ENCODE measurements at regions of chr17 and their contacts with region 1.

Region 1: GRCh38 chr17:80426681-80427326 is 11.8 kb downstream of the ENDOV start:
- DNase-seq: peak; percentile 46
- H3K4me3 ChIP-seq: no peak overlapping the region
- H3K27ac ChIP-seq: no peak overlapping the region
- H3K4me1 ChIP-seq: no peaks in the 10 kb centered on the region
- H3K27me3 ChIP-seq: no peaks in the 10 kb centered on the region
- CTCF ChIP-seq: peak; percentile 86 to 98

Region 2: DNA sequence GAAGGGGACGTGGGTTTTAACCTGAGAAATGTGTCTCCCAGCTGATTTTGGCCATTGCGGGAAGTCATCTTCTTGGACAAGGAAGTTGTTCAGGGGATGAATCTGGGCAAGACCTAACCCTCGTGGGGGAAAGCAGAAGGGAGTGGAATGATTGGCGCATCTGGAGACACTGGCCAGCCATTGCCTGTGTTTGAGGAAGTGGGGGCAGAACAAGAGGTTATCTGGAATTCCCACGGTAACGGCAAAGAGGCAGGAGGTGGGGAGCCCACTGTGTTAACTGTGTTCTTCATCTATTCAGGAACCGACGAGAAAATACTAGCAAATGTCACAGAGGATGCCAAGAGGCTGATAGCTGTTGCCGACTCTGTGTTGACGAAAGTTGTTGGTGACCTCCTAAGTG is 99.3 kb before region 1 on chr17:
- CTCF ChIA-PET with region 1: no interaction called
- dilution Hi-C with region 1: no loop called
- in situ Hi-C with region 1: no loop called
- intact Hi-C with region 1: no loop called
- DNase-seq: no peak
- H3K4me3 ChIP-seq: no peak overlapping the region
- H3K27ac ChIP-seq: no peak overlapping the region
- H3K4me1 ChIP-seq: no peaks in the 10 kb centered on the region
- H3K27me3 ChIP-seq: no peaks in the 10 kb centered on the region
- CTCF ChIP-seq: no peak

Region 3: GRCh38 chr17:80477647-80478478 is 51.1 kb after region 1 on chr17:
- CTCF ChIA-PET with region 1: no interaction called
- dilution Hi-C with region 1: no loop called
- in situ Hi-C with region 1: no loop called
- intact Hi-C with region 1: loop called (anchors 2 kb)
- DNase-seq: peak; percentile 35
- H3K4me3 ChIP-seq: peak overlapping the region in 2 of 3 experiments; percentile 30
- H3K27ac ChIP-seq: no peak overlapping the region
- H3K4me1 ChIP-seq: peaks cover 33% of the 10 kb centered on the region
- H3K27me3 ChIP-seq: peaks cover 57% of the 10 kb centered on the region
- CTCF ChIP-seq: peak; percentile 18 to 61

Region 4: DNA sequence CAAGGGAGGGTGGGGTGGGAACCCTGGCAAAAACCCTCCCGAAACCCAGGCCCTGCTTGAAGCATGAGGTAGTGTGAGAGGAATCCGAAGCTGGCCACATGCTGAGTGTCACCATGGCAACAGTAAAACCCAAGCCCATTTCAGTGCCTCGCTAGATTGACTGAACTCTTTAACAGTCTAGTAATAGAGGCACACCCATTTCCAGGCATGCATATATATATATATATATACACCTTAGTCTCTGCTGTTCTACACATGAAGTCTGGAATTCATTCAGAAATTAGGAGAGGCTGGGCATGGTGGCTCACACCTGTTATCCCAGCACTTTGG is 505.1 kb after region 1 on chr17:
- CTCF ChIA-PET with region 1: interaction called, 11 read pairs
- dilution Hi-C with region 1: no loop called
- in situ Hi-C with region 1: no loop called
- intact Hi-C with region 1: no loop called
- DNase-seq: peak; percentile 25
- H3K4me3 ChIP-seq: no peak overlapping the region
- H3K27ac ChIP-seq: no peak overlapping the region
- H3K4me1 ChIP-seq: no peaks in the 10 kb centered on the region
- H3K27me3 ChIP-seq: peaks cover 1% of the 10 kb centered on the region
- CTCF ChIP-seq: no peak

Region 5: DNA sequence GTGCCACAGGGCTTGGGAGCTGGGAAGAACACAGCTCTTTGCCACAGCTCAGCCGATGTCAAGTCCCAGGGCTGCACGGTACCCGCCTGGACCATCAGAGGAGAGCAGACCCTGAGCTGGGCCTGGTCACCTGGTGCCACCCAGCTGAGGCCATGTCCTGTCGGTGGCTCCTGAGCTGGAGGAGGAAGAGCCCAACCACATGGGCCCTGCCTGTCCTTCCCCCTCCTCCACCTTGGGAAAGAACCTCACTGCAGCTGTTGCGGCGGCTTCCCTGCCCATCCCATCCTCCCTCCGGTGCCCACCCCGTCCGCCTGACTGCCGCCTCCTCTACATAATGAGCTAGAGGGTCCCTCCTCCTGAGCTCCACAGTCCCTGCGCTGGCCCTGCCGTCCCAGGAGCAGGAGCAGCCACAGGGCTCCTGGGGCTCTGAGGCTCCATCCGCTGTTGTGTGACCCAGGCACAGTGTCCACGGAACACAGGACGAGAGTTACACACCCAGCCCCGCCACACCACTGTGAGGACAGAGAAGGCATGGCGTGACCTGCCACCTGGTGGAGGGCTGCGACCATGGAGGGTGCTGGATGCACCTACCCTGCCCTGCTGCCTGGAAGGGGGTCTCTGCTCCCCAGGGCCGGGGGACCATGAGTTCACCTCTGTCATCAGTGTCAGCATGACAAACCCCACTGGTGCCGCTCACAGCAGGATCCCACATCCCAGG is 543.4 kb after region 1 on chr17:
- CTCF ChIA-PET with region 1: interaction called, 3 read pairs
- dilution Hi-C with region 1: loop called (anchors 25 kb)
- in situ Hi-C with region 1: loop called (anchors 5 to 25 kb)
- intact Hi-C with region 1: no loop called
- DNase-seq: no peak
- H3K4me3 ChIP-seq: no peak overlapping the region
- H3K27ac ChIP-seq: no peak overlapping the region
- H3K4me1 ChIP-seq: no peaks in the 10 kb centered on the region
- H3K27me3 ChIP-seq: no peaks in the 10 kb centered on the region
- CTCF ChIP-seq: peak; percentile 32 to 62

Region 6: GRCh38 chr17:80981062-80981902 is 554.5 kb after region 1 on chr17:
- CTCF ChIA-PET with region 1: no interaction called
- dilution Hi-C with region 1: no loop called
- in situ Hi-C with region 1: loop called (anchors 5 to 25 kb)
- intact Hi-C with region 1: loop called (anchors 1 kb)
- DNase-seq: no peak
- H3K4me3 ChIP-seq: no peak overlapping the region
- H3K27ac ChIP-seq: no peak overlapping the region
- H3K4me1 ChIP-seq: no peaks in the 10 kb centered on the region
- H3K27me3 ChIP-seq: no peaks in the 10 kb centered on the region
- CTCF ChIP-seq: peak; percentile 35 to 47

Measured in mammary epithelial cell (primary cell).